Cardiac septum (tissue), 1 donor: ENCODE measurements at regions of chr19 and their contacts with region 1.

Region 1: GRCh38 chr19:52189735-52190486 is at the start of gene PPP2R1A:
- DNase-seq: peak; percentile 100
- total RNA-seq, gene PPP2R1A: 466 TPM

Region 2: GRCh38 chr19:52034051-52034728 is 155.7 kb before region 1 on chr19:
- intact Hi-C with region 1: no loop called
- DNase-seq: no peak

Region 3: DNA sequence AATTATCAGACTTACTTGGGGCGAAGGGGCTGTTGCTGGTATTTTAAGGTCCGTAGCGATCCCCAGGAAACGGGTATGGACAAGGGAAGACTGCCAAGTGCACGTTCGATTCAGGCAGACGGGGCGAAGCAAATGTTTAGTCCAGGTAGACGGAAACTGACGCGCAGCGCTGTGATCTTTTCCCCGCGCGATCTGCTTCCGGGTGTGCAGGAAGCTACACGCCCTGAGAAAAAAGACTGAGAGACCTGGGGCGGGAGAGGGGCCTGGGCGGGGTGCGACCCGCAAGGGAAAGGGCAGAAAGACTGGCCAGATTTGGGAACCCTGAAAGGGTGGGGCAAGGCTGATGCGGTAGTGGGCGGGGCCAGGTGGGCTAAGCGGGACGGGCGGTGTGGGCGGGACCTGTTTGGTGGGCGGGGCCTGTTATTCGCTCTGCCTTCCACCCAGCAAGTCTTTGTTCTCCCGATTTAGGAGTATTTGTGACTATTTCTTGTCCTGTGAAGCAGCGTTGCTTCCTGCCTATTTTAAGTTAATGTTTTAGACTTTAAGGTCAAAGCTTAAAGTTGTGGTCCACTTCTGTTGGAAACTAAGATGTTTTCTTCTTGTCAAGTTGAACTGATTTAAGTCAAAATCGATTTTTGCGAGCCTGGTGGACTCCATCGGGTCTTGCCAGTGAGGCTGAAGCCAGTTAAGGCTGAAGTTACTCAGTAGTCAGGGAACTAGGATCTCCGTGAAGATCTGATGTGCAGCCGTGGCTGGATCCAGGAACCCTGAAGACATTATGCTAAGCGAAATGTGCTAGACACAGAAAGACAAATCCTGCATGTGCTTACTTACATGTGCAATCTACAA is 18.4 kb before region 1 on chr19 and contains the start of gene ZNF836:
- intact Hi-C with region 1: loop called (anchors 1 kb)
- DNase-seq: peak; percentile 96
- total RNA-seq, gene ZNF836: 5.9 TPM

Region 4: GRCh38 chr19:52322429-52322828 is 132.5 kb after region 1 on chr19:
- intact Hi-C with region 1: no loop called
- DNase-seq: no peak